Dorsolateral prefrontal cortex (tissue), 120 donors: ENCODE measurements at regions of chr1 and their contacts with region 1.

Region 1: DNA sequence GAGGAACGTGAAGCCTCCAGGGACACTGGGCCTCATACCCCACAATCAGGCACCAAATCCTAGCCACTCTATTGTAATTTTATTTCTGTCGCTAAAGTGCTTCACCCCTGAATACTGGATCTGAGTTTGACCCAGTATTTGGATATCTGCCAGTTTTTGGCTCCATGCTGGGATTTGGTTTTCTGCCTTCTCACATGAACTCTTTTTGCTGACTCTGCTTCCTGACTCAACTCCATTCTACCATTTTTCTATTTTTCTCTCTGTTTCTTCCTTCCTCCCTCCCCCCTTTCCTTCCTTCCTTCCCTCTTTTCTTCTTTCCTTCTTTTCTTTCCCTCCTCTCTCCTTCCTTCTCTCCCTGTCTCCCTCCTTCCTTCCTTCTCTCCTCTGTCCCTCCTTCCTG is 151.3 kb upstream of the GJB5 start:
- DNase-seq: no peak
- H3K4me3 ChIP-seq: no peak overlapping the region
- H3K27ac ChIP-seq: no peak overlapping the region
- H3K27me3 ChIP-seq: peaks cover 0 to 9% (median 0%) of the 10 kb centered on the region in 45 donors
- CTCF ChIP-seq: no peak

Region 2: GRCh38 chr1:33876970-33877650 is 726.5 kb before region 1 on chr1:
- intact Hi-C with region 1: loop called in 1 of 2 experiments (anchors 10 kb)
- DNase-seq: peak in 9 of 10 donors; percentile 29 to 82 (median 65)
- H3K4me3 ChIP-seq: no peak overlapping the region
- H3K27ac ChIP-seq: no peak overlapping the region
- H3K27me3 ChIP-seq: no peaks in the 10 kb centered on the region
- CTCF ChIP-seq: no peak